Esophagus muscularis mucosa (tissue), 4 donors: ENCODE measurements at regions of chr9 and their contacts with region 1.

Region 1: GRCh38 chr9:112007575-112008240 is 111.1 kb downstream of the UGCG start:
- DNase-seq: no peak
- H3K4me3 ChIP-seq: no peak overlapping the region
- H3K27ac ChIP-seq: no peak overlapping the region
- H3K4me1 ChIP-seq: peaks cover 16 to 27% (median 24%) of the 10 kb centered on the region in 4 donors
- H3K27me3 ChIP-seq: no peaks in the 10 kb centered on the region
- CTCF ChIP-seq: no peak
- EP300 ChIP-seq: no peak
- POLR2A ChIP-seq: no peak

Region 2: DNA sequence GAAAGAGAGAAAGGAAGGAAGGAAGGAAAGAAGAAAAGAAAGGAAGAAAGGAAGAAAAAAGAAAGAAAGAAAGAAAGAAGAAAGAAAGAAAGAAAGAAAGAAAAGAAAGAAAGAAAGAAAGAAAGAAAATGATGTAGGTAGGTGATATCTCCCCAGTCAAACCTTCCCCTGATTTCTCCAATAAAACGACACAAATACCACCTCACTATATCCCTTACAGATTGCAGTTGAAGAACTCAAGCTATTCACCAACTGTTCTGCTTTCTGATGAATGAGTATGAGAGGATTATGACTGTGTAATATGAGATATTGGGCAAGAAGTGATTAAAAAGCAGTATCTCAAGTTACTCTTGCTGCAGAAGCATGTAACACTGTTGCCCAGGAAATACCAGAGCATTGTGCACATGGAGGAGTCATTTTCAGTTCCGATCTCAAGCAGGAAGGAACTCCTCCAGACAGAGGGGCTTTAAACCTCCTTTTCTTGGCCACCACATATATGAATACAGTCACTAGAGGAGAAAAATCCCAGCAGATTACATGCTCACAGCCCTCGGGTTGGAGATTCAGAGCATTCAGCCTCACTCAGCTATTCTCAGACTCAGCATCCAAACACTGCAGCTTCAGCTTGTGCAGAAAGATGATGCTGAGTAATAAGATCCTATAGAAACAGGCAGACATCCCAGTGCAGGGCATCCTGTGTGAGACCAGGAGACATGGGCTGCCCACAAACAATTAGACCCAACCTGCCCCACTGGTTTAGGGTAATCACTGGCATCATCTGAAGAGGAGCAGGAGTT is 49.7 kb before region 1 on chr9:
- intact Hi-C with region 1: loop called (anchors 5 kb)
- DNase-seq: no peak
- H3K4me3 ChIP-seq: peak overlapping the region in 3 of 4 donors; percentile 0 to 48 (median 18)
- H3K27ac ChIP-seq: peak overlapping the region in 2 of 4 donors; percentile 58 to 60
- H3K4me1 ChIP-seq: peaks cover 8 to 17% (median 12%) of the 10 kb centered on the region in 4 donors
- H3K27me3 ChIP-seq: no peaks in the 10 kb centered on the region
- CTCF ChIP-seq: no peak
- EP300 ChIP-seq: no peak
- POLR2A ChIP-seq: no peak

Region 3: DNA sequence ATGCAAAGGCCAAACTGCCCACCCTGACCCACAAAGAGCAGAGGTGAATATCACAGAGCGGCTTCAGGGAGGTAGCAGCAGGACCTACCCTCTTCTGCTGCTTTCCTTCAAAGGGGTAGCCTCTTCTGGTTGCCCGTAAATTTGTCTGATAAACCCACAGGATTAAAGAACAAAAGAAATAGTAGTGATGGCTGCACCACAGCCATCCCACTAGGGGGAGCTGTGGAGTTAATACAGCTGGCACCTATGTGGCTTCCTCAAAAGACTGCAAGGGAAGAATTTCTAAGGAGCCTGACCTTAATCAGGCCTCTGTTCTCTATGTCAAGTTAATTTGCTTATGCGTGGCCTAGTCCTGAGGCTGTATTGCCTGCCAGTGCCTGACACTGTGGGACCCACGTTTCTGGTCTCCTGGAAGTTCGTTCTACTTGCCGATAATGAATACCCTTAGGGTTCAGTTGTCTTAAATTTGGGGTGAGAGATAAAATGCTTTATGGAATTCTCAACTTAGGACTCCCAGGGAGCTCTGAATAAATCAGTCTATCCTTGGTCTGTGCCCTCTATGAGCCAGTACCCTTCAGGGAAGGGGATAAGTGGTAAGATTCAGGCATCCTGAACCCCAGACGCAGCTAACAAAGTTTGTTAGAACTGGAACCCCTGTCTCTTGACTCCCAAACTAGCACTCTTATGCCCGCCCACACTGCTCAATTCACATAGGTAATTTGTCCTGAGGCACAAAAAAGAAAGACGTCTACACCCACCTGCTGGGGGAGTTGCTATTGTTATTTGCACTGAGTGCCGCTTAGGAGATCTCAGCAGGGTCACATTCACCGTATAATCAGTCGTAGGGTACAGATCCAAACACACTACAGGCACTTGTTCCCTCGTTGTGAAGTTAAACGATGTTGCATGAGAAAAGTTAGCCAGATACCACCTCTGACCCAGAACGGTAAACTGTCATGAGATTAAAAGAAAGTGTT is 90.3 kb after region 1 on chr9:
- intact Hi-C with region 1: no loop called
- DNase-seq: peak; percentile 88
- H3K4me3 ChIP-seq: no peak overlapping the region
- H3K27ac ChIP-seq: no peak overlapping the region
- H3K4me1 ChIP-seq: no peaks in the 10 kb centered on the region
- H3K27me3 ChIP-seq: no peaks in the 10 kb centered on the region
- CTCF ChIP-seq: peak; percentile 77 to 94 (median 91)
- EP300 ChIP-seq: no peak
- POLR2A ChIP-seq: no peak